ENCODE measurements at regions of chr1 and their contacts with region 1.

Region 1: DNA sequence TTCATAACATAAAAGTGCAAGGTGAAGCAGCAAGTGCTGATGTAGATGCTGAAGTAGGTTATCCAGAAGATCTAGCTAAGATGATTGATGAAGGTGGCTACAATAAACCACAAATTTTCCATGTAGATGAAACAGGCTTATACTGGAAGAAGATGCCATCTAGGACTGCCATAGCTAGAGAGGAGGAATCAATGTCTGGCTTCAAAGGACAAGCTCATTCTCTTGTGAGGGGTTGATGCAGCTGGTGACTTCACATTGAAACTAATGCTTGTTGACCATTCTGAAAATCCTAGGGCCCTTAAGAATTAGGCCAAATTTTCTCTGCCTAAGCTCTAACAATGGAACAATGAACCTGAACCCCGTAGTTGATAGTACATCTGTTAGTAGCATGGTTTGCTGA is 34.0 kb downstream of the FLVCR1 start:
- DNase-seq: no peak
- H3K4me3 ChIP-seq: no peak overlapping the region
- H3K27ac ChIP-seq: no peak overlapping the region; the same call in 1 of the 2 replicates
- H3K4me1 ChIP-seq: no peaks in the 10 kb centered on the region
- H3K27me3 ChIP-seq: no peaks in the 10 kb centered on the region
- CTCF ChIP-seq: no peak
- EP300 ChIP-seq: no peak
- POLR2A ChIP-seq: peak; percentile 15 to 67; a peak in 2 of 3 replicates
- RAD21 ChIP-seq: no peak

Region 2: DNA sequence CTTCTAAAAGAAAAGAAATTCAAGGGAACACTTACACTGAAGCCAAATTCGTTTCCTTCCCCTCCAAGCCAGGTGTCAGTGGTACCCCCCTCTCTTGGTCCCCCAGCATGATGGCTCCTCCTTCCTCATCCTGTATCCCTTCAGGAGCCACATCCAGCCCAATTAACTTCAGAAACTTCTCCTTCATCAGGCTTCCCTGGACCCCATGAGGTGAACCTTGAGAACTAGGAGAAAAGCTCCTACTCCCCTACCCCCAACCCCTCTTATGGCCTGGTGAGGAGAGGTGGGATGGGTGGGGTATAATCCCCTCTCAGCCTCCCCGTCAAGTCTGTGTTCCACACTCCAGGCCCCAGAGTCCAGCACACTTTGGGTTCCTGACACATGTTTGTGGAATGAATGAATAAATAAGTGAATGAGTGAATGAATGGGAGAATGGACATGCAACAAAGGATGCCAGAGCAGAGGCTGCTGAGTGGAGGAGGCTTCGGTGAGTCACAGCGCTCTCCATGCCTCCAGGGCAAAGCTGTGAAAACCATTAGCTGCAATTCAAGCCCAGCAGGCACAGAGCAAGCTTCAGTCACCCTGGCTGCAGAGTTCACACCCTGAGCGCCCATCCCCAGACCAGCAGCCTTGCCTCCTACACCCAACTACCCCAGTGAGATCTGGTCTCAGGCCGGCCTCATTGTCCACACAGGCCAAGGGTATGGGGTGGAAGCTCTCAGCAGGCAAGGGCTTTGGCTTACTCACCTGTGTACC is 236.3 kb before region 1 on chr1:
- CTCF ChIA-PET with region 1: no interaction called
- POLR2A ChIA-PET with region 1: no interaction called
- DNase-seq: no peak
- H3K4me3 ChIP-seq: no peak overlapping the region
- H3K27ac ChIP-seq: no peak overlapping the region
- H3K4me1 ChIP-seq: peaks cover 0 to 7% (median under 1%) of the 10 kb centered on the region in 4 experiments; a peak in 2 of 7 replicates
- H3K27me3 ChIP-seq: no peaks in the 10 kb centered on the region
- CTCF ChIP-seq: no peak
- EP300 ChIP-seq: no peak
- POLR2A ChIP-seq: no peak
- RAD21 ChIP-seq: no peak

Region 3: DNA sequence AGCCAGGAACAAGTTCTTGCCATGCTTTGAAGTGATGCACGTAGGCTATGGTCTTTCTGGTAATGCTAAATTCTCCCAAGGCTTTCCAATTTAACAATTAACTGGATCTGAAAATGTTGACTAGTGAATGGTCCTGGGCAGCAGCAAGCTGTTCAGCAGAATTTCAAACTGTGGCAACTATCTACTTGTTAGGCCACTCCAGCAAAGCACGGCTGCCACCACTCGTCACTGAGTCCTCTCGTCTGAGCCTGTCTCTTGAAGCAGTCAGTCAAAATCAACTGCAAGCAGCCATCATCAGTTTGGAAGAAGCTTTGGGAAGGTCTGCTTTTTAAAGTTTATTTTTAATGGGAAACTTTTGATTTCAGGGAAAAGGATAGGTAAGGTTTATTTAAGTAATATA is 27.9 kb before region 1 on chr1:
- CTCF ChIA-PET with region 1: no interaction called
- POLR2A ChIA-PET with region 1: interaction called, 67 read pairs
- DNase-seq: no peak
- H3K4me3 ChIP-seq: peak overlapping the region in 1 of 4 experiments; percentile 57; a peak in 1 of 8 replicates
- H3K27ac ChIP-seq: no peak overlapping the region
- H3K4me1 ChIP-seq: no peaks in the 10 kb centered on the region; a peak in 1 of 7 replicates
- H3K27me3 ChIP-seq: no peaks in the 10 kb centered on the region
- CTCF ChIP-seq: no peak
- EP300 ChIP-seq: no peak
- POLR2A ChIP-seq: no peak
- RAD21 ChIP-seq: no peak

Measured in H1 (cell line).